H1 (cell line): ENCODE measurements at regions of chr12 and their contacts with region 1.

Region 1: GRCh38 chr12:107607464-107608392 is 77.9 kb upstream of the PWP1 start:
- DNase-seq: peak; percentile 76 to 94
- H3K4me3 ChIP-seq: no peak overlapping the region
- H3K27ac ChIP-seq: no peak overlapping the region
- H3K4me1 ChIP-seq: peaks cover 6 to 16% (median 10%) of the 10 kb centered on the region in 4 experiments
- H3K27me3 ChIP-seq: 0 out of 7 replicates have a peak, but pooled peaks cover 0 to 2% (median 0%) of the 10 kb centered on the region in 4 experiments
- CTCF ChIP-seq: peak; percentile 82 to 98 (median 97)
- EP300 ChIP-seq: no peak
- POLR2A ChIP-seq: no peak
- RAD21 ChIP-seq: peak; percentile 98 to 99

Region 2: DNA sequence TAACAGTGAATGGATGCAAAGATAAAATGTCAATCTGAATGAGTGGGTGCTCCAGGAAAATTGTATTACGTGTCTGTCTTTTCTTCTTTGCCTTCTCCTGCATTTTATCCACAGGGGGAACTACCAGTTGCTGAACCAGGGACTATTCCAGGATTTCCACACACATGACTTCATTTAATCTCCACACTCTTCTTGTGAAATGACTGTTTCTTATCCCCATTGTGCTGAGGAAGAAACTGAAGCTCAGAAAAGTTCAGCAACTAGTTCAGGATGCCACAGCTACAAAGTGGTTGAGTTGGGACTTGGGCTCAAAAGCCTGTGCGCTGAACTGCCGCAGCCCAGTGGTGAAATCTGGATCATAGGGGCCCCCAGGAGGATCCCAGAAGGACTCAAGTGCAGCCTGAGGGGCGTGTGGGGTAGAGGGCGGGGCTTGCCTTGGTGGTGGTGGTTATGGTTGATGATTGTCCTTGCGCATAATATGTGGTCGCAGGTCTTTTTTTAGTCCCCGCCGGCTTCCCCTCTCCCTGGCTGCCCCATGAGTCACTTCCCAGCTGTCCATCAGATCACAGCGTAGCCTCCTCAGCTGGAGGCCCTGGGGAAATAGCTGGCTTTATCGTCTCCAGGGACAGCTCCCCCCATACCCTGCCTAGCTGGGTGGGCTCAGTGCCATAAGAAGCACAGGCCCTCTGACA is 279.1 kb before region 1 on chr12:
- CTCF ChIA-PET with region 1: interaction called, 16 read pairs
- POLR2A ChIA-PET with region 1: no interaction called
- DNase-seq: no peak
- H3K4me3 ChIP-seq: no peak overlapping the region
- H3K27ac ChIP-seq: no peak overlapping the region
- H3K4me1 ChIP-seq: peaks cover 0 to 8% (median 5%) of the 10 kb centered on the region in 4 experiments; a peak in 6 of 7 replicates
- H3K27me3 ChIP-seq: no peaks in the 10 kb centered on the region
- CTCF ChIP-seq: no peak
- EP300 ChIP-seq: no peak
- POLR2A ChIP-seq: no peak
- RAD21 ChIP-seq: no peak

Region 3: GRCh38 chr12:107429006-107429697 is 178.6 kb before region 1 on chr12:
- CTCF ChIA-PET with region 1: interaction called, 10 read pairs
- POLR2A ChIA-PET with region 1: no interaction called
- DNase-seq: no peak
- H3K4me3 ChIP-seq: no peak overlapping the region
- H3K27ac ChIP-seq: no peak overlapping the region
- H3K4me1 ChIP-seq: peaks cover 0 to 7% (median 1%) of the 10 kb centered on the region in 4 experiments; a peak in 4 of 7 replicates
- H3K27me3 ChIP-seq: no peaks in the 10 kb centered on the region
- CTCF ChIP-seq: no peak
- EP300 ChIP-seq: no peak
- POLR2A ChIP-seq: no peak
- RAD21 ChIP-seq: no peak

Region 4: GRCh38 chr12:107458163-107458562 is 149.6 kb before region 1 on chr12:
- CTCF ChIA-PET with region 1: interaction called, 10 read pairs
- POLR2A ChIA-PET with region 1: no interaction called
- DNase-seq: no peak
- H3K4me3 ChIP-seq: no peak overlapping the region
- H3K27ac ChIP-seq: no peak overlapping the region
- H3K4me1 ChIP-seq: peaks cover 0 to 2% (median 0%) of the 10 kb centered on the region in 4 experiments; a peak in 1 of 7 replicates
- H3K27me3 ChIP-seq: no peaks in the 10 kb centered on the region
- CTCF ChIP-seq: no peak
- EP300 ChIP-seq: no peak
- POLR2A ChIP-seq: no peak
- RAD21 ChIP-seq: no peak

Region 5: GRCh38 chr12:107522692-107523477 is 84.8 kb before region 1 on chr12:
- CTCF ChIA-PET with region 1: interaction called, 37 read pairs
- POLR2A ChIA-PET with region 1: interaction called, 3 read pairs
- DNase-seq: peak; percentile 23 to 68
- H3K4me3 ChIP-seq: no peak overlapping the region
- H3K27ac ChIP-seq: no peak overlapping the region
- H3K4me1 ChIP-seq: no peaks in the 10 kb centered on the region
- H3K27me3 ChIP-seq: no peaks in the 10 kb centered on the region
- CTCF ChIP-seq: peak; percentile 60 to 87 (median 77)
- EP300 ChIP-seq: no peak
- POLR2A ChIP-seq: no peak
- RAD21 ChIP-seq: peak; percentile 66 to 73

Region 6: DNA sequence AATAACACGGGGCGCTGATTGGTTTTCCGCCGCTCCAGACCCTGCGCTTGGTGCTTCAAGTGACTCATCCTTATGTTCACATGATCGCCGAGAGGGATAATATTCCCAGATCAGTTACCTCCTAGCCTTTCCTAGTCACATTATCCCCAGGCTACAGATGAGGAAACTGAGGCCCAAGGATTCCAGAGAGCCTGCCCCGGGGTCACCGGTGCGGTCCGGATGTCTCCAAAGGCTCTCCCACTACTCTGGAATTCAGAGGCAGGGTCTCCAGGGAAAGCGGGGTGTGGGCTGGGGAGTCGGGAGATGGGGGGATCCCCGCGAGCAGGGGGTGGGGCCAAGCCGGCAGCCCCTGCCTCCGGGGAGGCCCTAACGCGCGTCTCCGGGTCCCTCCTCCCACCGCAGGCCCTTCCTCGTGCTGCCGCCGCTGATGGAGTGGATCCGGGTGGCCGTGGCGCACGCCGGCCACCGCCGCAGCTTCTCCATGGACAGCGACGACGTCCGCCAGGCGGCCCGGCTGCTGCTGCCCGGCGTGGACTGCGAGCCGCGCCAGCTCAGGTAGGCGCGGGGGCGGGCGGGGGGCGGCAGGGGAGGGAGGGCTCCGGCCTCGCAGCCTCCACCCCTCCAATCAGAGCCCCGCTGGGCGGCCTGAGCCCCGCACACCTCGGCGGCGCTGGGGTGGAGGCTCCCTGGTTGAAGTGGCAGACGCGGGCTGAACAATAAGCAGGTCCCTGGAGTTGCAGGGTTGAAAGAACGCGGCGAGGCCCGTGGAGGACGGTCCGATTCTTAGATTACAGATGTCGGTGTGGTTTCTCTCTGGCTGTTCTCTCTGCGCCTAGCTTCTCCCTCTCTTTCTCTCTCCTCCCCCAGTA is 26.7 kb before region 1 on chr12:
- CTCF ChIA-PET with region 1: interaction called, 25 read pairs
- POLR2A ChIA-PET with region 1: interaction called, 3 read pairs
- DNase-seq: peak in 1 of 2 experiments; percentile 59
- H3K4me3 ChIP-seq: peak overlapping the region; percentile 19 to 56 (median 26); a peak in 7 of 8 replicates
- H3K27ac ChIP-seq: no peak overlapping the region
- H3K4me1 ChIP-seq: peaks cover 7 to 24% (median 12%) of the 10 kb centered on the region in 4 experiments; a peak in 6 of 7 replicates
- H3K27me3 ChIP-seq: peaks cover 0 to 23% (median 15%) of the 10 kb centered on the region in 4 experiments; a peak in 5 of 7 replicates
- CTCF ChIP-seq: no peak
- EP300 ChIP-seq: no peak
- POLR2A ChIP-seq: no peak
- RAD21 ChIP-seq: no peak